ENCODE measurements at regions of chr17 and their contacts with region 1.

Region 1: GRCh38 chr17:57084802-57085447 is at the start of gene AKAP1:
- DNase-seq: peak; percentile 85 to 99 (median 94)

Region 2: DNA sequence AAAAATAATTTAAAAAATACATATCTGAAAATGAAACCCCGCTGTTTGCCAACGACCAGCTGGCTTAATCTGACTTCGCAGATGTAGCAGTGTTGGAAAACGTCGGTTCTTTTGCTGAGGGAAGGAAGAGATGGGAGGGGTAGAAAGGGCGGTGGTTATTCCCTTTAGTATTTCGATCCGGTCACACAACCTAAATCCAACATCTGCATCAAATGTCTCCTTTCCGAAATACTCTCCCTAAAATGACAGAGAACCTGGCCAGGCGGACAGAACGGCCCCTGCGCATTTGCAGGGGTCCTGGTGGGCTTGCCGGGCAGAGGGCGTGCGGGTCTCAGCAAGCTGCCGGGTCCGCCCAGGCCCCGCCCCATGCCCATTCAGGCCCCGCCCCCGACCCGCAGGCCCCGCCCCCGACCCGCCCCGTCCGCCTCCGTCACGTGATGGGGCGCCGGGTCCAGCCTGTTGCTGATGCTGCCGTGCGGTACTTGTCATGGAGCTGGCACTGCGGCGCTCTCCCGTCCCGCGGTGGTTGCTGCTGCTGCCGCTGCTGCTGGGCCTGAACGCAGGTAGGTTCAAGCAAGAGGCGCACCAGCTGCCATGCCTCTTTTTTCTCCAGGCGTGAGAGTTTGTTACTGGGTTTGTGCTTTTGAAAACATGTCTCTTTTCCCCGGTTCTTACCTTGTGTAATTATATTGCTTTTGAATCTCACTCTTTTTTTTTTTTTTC is 107.1 kb before region 1 on chr17 and contains the start of gene SCPEP1:
- intact Hi-C with region 1: loop called (anchors 5 kb)
- DNase-seq: peak; percentile 79 to 98 (median 90)

Measured in posterior cingulate gyrus (tissue), 11 donors.